Sigmoid colon (tissue), 7 donors: ENCODE measurements at regions of chr4 and their contacts with region 1.

Region 1: DNA sequence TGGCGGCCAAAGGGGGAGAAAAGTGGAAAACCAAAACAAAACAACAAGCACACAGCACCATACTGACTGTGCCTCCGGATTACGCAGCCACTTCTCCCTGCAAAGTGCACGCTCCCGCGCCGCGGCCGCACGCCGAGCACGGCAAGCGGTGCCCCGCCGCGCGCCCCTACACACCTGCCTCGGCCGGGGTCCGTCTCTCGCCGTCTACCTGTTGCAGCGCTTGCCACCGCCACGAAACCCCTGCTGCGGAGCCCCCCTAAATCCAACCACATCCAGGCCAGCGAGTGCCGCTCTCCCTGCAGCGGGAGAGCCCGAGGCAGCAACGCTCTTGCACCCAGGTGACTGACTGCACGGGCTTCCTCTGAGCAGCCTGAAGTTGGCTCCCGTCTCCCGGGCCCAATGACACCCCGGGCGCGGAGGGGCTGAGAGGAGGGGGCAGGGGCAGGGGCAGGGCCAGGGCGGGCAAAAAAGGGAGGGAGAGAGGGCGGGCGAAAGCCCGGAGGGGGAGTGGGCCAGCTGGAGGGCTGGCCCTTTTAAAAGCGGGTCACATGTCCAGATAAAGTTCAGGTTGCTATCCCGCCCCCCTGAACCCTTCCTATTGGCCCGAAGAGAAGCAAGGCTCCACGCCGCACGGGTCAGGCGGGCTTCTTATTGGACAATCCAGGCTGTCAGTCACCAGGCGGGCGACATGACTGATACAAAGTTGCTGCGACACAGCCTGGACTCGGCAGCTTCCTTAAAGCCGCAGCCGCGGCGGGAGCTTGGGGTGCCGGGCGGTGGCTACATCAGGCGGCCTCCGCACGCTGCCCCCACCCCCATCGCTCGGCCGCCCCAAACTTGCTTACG is at the start of gene NR3C2:
- DNase-seq: peak; percentile 100
- H3K4me3 ChIP-seq: peak within 1 kb of the TSS; percentile 91 to 96 (median 93)
- H3K27ac ChIP-seq: peak within 1 kb of the TSS; percentile 92 to 97 (median 96)
- H3K4me1 ChIP-seq: peaks cover 0 to 38% (median 16%) of the 10 kb centered on the region in 4 donors
- H3K27me3 ChIP-seq: no peaks in the 10 kb centered on the region
- CTCF ChIP-seq: no peak
- EP300 ChIP-seq: no peak
- POLR2A ChIP-seq: peak; percentile 99 to 100
- total RNA-seq, gene NR3C2: 15.6 to 34.9 (median 21.3) TPM

Region 2: GRCh38 chr4:147683717-147684700 is 758.2 kb before region 1 on chr4 and contains the start of gene PRMT9:
- intact Hi-C with region 1: loop called (anchors 5 kb)
- DNase-seq: peak; percentile 96
- H3K4me3 ChIP-seq: peak within 1 kb of the TSS; percentile 65 to 90 (median 80)
- H3K27ac ChIP-seq: peak within 1 kb of the TSS; percentile 84 to 95 (median 92)
- H3K4me1 ChIP-seq: peaks cover 0 to 22% (median 16%) of the 10 kb centered on the region in 4 donors
- H3K27me3 ChIP-seq: no peaks in the 10 kb centered on the region
- CTCF ChIP-seq: no peak
- EP300 ChIP-seq: peak in 3 of 4 donors; percentile 94 to 95 (median 94)
- POLR2A ChIP-seq: peak; percentile 87 to 90
- total RNA-seq, gene PRMT9: 7.1 to 10.7 (median 10.0) TPM

Region 3: DNA sequence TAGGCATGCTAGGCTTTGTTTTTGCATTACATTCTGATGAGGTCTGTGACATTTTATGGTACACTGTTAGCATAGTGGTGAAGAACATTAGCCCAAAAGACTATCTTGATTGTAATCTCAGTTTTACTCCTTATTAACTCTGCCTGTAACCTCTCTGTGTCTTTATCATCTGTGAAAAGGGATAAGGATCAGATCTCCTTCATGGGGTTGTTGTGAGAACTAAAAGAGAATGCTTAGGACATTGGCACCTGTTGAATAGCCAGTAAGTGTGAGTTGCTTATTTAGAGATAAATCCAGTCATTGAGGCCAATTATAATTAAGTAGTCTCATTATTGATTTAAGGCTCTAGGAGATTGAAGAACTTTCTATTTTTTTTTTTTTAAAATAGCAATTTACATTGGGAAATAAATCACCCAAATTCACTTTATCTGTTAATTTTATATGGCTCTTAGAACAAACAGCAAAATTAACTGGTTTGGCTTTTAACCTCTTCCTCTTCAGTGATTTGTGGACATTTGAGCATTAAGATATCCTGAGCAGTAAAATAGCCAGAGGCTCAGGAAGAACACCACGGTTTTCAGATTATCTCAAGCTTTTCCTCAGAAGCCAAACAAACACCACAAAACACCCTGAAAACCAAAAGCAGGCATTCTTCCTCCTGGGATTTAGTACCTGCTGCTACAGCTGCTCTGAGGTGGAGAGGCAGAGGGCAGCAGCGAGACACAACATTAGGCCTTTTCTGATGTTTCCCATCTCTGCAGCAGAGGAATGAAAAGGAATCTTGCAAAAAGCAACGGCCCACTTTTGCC is 517.4 kb before region 1 on chr4:
- intact Hi-C with region 1: loop called (anchors 10 kb)
- DNase-seq: no peak
- H3K4me3 ChIP-seq: no peak overlapping the region
- H3K27ac ChIP-seq: no peak overlapping the region
- H3K4me1 ChIP-seq: peaks cover 0 to 43% (median 21%) of the 10 kb centered on the region in 4 donors
- H3K27me3 ChIP-seq: no peaks in the 10 kb centered on the region
- CTCF ChIP-seq: peak in 2 of 4 experiments; percentile 24 to 28
- EP300 ChIP-seq: no peak
- POLR2A ChIP-seq: no peak

Region 4: GRCh38 chr4:148025981-148026380 is 416.2 kb before region 1 on chr4:
- intact Hi-C with region 1: loop called (anchors 10 kb)
- DNase-seq: no peak
- H3K4me3 ChIP-seq: no peak overlapping the region
- H3K27ac ChIP-seq: no peak overlapping the region
- H3K4me1 ChIP-seq: peaks cover 0 to 52% (median 37%) of the 10 kb centered on the region in 4 donors
- H3K27me3 ChIP-seq: no peaks in the 10 kb centered on the region
- CTCF ChIP-seq: no peak
- EP300 ChIP-seq: no peak
- POLR2A ChIP-seq: no peak

Region 5: GRCh38 chr4:148216866-148217814 is 225.1 kb before region 1 on chr4:
- intact Hi-C with region 1: loop called (anchors 5 kb)
- DNase-seq: no peak
- H3K4me3 ChIP-seq: peak overlapping the region in 2 of 4 donors; percentile 16 to 22
- H3K27ac ChIP-seq: peak overlapping the region in 3 of 4 donors; percentile 19 to 78 (median 75)
- H3K4me1 ChIP-seq: peaks cover 0 to 48% (median 33%) of the 10 kb centered on the region in 4 donors
- H3K27me3 ChIP-seq: no peaks in the 10 kb centered on the region
- CTCF ChIP-seq: no peak
- EP300 ChIP-seq: no peak
- POLR2A ChIP-seq: no peak

Region 6: DNA sequence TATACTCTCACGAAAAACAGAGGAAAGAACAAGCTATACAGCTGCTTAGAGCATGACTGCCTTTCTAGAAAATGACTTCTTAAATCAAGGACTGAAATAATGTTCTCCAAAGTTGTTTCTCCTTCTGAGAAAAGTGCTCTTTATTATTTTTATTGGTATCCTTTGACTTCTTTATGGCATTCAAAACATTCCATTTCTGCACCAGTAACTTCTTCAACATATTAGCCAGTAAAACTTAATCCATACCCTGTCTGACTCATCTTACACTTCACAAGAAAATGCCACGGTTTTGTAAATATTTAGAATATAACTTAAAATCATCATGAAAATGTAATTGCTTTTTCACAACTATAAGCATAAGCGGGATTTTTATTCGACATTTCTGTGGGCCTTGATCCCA is 180.4 kb before region 1 on chr4:
- intact Hi-C with region 1: loop called (anchors 5 kb)
- DNase-seq: no peak
- H3K4me3 ChIP-seq: no peak overlapping the region
- H3K27ac ChIP-seq: peak overlapping the region in 2 of 4 donors; percentile 18 to 30
- H3K4me1 ChIP-seq: peaks cover 0 to 40% (median 19%) of the 10 kb centered on the region in 4 donors
- H3K27me3 ChIP-seq: no peaks in the 10 kb centered on the region
- CTCF ChIP-seq: no peak
- EP300 ChIP-seq: no peak
- POLR2A ChIP-seq: no peak

Region 7: GRCh38 chr4:148376151-148376550 is 66.1 kb before region 1 on chr4:
- intact Hi-C with region 1: loop called (anchors 5 kb)
- DNase-seq: peak; percentile 75
- H3K4me3 ChIP-seq: peak overlapping the region in 3 of 4 donors; percentile 23 to 38 (median 38)
- H3K27ac ChIP-seq: peak overlapping the region in 3 of 4 donors; percentile 1 to 54 (median 48)
- H3K4me1 ChIP-seq: peaks cover 0 to 12% (median 3%) of the 10 kb centered on the region in 4 donors
- H3K27me3 ChIP-seq: no peaks in the 10 kb centered on the region
- CTCF ChIP-seq: no peak
- EP300 ChIP-seq: no peak
- POLR2A ChIP-seq: no peak